ENCODE measurements at regions of chr1 and their contacts with region 1.

Region 1: GRCh38 chr1:32817159-32817814 is at the starts of genes S100PBP and YARS1:
- DNase-seq: peak; percentile 100
- ATAC-seq: peak; percentile 96
- H3K4me3 Mint-ChIP-seq: peak within 1 kb of the TSS; percentile 100
- H3K27ac Mint-ChIP-seq: peak within 1 kb of the TSS; percentile 98
- H3K4me1 Mint-ChIP-seq: peaks cover 50% of the 10 kb centered on the region
- H3K27me3 Mint-ChIP-seq: no peaks in the 10 kb centered on the region
- CTCF ChIP-seq: no peak
- total RNA-seq, gene S100PBP: 25.7 to 27.3 TPM
- total RNA-seq, gene YARS1: 231 to 238 TPM

Region 2: GRCh38 chr1:32718527-32718926 is 98.8 kb before region 1 on chr1:
- CTCF ChIA-PET with region 1: no interaction called
- POLR2A ChIA-PET with region 1: no interaction called
- intact Hi-C with region 1: no loop called
- DNase-seq: no peak
- ATAC-seq: no peak
- H3K4me3 Mint-ChIP-seq: no peak overlapping the region
- H3K27ac Mint-ChIP-seq: no peak overlapping the region
- H3K4me1 Mint-ChIP-seq: peaks cover 4% of the 10 kb centered on the region
- H3K27me3 Mint-ChIP-seq: peaks cover 6% of the 10 kb centered on the region
- CTCF ChIP-seq: no peak

Region 3: DNA sequence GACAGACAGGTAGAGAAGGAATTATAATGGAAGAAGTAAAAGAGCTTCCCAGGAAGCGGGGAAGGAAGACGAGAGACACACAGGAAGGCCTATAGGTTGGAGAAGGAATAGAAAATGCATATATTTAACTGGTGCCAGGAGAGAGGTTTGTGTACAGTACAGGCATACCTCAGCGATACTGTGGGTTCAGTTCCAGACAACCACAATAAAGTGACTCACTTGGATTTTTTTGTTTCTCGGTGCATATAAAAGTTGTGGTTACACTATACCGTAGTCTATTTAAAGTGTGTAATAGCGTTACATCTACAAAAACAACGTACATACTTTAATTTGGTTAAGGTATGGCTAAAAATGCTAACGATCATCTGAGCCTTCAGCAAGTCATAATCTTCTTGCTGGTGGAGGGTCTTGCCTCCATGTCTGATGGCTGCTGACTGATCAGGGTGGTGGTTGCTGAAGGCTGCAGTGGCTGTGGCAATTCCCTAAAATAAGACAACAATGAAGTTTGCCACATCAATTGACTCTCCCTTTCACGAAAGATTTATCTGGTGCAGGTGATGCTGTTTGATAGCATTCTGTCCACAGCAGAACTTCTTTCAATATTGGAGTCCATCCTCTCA is 16.1 kb before region 1 on chr1:
- CTCF ChIA-PET with region 1: no interaction called
- POLR2A ChIA-PET with region 1: interaction called, 39 read pairs
- intact Hi-C with region 1: no loop called
- DNase-seq: peak; percentile 62
- ATAC-seq: peak; percentile 51
- H3K4me3 Mint-ChIP-seq: peak overlapping the region; percentile 25
- H3K27ac Mint-ChIP-seq: peak overlapping the region; percentile 93
- H3K4me1 Mint-ChIP-seq: peaks cover 59% of the 10 kb centered on the region
- H3K27me3 Mint-ChIP-seq: no peaks in the 10 kb centered on the region
- CTCF ChIP-seq: no peak

Region 4: DNA sequence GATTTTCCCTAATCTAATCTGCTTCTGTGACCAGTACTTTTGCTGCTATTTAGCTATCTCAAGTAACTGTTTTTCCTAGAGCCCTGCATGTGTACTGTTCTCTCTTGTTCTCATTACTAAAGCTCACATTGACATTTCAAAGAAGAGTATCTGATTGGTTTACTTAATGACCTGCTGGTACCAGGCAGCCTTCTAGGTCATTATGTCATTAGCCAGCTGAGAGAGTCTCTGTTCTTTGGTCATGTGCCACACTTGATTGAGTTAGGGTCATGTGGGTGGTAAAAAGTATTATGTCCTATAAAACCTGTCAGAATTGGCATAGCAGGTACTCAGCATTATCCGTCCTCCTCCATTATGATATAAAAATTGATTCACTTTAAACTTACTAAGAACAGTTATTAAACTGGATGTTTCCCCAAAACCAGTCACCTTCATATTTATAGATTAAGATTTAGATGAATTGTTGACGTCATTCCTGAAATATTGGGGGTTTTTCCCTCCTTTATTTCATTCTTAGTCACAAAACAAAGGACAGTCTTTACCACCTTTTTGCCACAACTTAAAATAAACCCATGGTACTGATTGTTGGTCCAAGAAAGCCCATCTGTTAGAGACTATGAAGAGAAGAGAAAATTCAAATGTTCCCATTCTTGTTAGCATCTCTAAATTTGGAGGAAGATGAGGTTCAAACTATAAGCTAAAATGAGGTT is 31.2 kb after region 1 on chr1:
- CTCF ChIA-PET with region 1: no interaction called
- POLR2A ChIA-PET with region 1: no interaction called
- intact Hi-C with region 1: no loop called
- DNase-seq: no peak
- ATAC-seq: no peak
- H3K4me3 Mint-ChIP-seq: no peak overlapping the region
- H3K27ac Mint-ChIP-seq: no peak overlapping the region
- H3K4me1 Mint-ChIP-seq: peaks cover 7% of the 10 kb centered on the region
- H3K27me3 Mint-ChIP-seq: no peaks in the 10 kb centered on the region
- CTCF ChIP-seq: no peak